Ascending aorta (tissue), 2 donors: ENCODE measurements at regions of chr12 and their contacts with region 1.

Region 1: DNA sequence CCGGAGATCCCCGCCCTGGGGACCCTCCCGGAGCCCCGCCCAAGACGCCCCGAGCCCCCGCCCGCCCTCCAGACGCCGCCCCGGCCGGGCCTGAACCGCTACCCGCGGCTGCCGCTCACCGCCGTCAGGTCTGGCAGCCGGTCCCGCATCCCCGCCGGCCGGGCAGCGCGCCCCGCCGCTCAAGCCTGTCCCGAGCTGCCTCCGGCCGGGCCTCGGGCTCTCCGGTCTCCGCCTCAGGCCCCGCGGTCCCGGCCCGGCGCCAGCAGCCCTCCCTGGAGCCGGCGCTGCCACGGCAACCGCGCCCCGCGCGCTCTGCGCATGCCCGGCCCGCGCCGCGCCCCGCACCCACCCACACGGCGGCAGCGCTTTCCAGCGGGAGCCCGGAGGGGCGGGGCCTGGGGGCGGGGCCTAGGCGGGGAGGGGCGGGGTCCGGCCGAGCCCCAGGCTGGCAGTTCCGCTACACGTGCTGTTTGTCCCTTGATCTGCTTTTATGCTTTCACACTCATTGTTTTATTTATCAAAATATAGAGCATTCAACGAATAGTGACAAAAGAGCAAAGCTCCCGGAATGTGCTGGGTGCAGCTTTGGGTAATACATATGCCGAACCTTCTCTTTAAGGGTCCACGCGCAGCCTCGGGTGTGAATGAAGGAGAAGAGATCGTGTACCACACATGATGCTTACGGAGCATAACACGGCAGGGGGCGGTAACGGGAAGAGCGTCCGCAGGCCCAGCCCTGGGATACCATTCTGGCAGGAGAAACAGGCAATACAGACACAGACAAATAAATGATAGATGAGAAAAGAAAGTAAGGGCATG is at the start of gene STX2:
- DNase-seq: peak; percentile 31 to 92
- H3K4me3 ChIP-seq: peak within 1 kb of the TSS; percentile 93 to 100
- H3K27ac ChIP-seq: peak within 1 kb of the TSS; percentile 64 to 75
- H3K4me1 ChIP-seq: peaks cover 5 to 8% of the 10 kb centered on the region in 2 donors
- H3K27me3 ChIP-seq: no peaks in the 10 kb centered on the region
- CTCF ChIP-seq: peak in 2 of 3 experiments; percentile 29 to 30
- total RNA-seq, gene STX2: 16.6 TPM

Region 2: DNA sequence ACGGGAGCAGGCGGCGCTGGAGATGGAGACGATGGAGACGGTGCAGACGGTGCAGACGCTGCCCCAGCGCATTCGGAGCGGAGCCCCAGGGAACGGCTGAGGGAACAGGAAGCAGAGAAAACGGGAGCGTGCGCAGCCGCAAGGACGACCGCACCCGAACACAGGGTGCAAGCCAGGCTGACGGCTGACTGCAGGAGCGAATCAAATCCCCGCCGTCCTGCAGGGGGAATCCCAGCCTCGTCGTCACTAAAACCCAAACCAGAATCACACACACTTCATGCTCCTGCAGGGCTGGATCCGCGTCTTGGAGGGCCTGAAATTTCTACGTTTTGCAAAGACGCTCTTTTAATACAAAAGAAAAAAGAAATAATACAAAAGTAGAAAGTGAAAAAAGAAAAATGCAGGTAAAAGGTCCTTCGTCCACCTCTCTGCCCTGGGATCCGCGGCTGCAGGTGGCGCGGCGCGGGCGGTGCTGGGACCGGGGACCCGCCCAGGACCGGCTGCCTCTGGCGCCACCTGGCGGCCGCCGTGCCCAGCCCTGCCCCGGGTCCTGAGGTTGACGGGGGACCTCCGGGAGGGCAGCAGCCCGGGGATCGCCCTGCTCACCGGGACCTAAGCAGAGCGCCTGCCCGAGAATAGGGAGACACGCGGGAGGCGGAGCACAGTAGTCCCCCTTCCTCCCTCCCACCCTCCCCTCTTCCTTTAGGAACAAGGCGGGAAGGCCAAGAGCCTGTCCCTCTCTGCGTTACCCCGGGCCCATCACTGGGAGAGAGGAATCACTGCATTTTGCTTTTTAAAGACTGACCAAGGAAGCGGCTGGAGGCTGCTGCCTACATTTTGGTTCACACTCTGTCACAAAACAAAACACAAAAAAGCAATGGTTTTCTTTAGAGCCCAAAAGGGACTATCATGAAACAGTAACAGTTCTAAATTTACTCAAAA is 20.3 kb before region 1 on chr12:
- intact Hi-C with region 1: loop called (anchors 2 kb)
- DNase-seq: peak in 1 of 2 donors; percentile 75
- H3K4me3 ChIP-seq: peak overlapping the region; percentile 50 to 57
- H3K27ac ChIP-seq: peak overlapping the region in 1 of 2 donors; percentile 13
- H3K4me1 ChIP-seq: no peaks in the 10 kb centered on the region
- H3K27me3 ChIP-seq: no peaks in the 10 kb centered on the region
- CTCF ChIP-seq: peak; percentile 53 to 84 (median 67)

Region 3: GRCh38 chr12:130871286-130872178 is 32.4 kb after region 1 on chr12 and contains the start of gene RAN:
- intact Hi-C with region 1: loop called (anchors 1 kb)
- DNase-seq: peak; percentile 33 to 93
- H3K4me3 ChIP-seq: peak within 1 kb of the TSS; percentile 90 to 98
- H3K27ac ChIP-seq: peak within 1 kb of the TSS; percentile 74 to 87
- H3K4me1 ChIP-seq: peaks cover 3 to 17% of the 10 kb centered on the region in 2 donors
- H3K27me3 ChIP-seq: no peaks in the 10 kb centered on the region
- CTCF ChIP-seq: peak in 1 of 3 experiments; percentile 8
- total RNA-seq, gene RAN: 73.7 TPM